Activated naive CD4-positive, alpha-beta T cell treated with anti-CD3 and anti-CD28 coated beads for 36 hours (primary cell): ENCODE measurements at regions of chr3 and their contacts with region 1.

Region 1: DNA sequence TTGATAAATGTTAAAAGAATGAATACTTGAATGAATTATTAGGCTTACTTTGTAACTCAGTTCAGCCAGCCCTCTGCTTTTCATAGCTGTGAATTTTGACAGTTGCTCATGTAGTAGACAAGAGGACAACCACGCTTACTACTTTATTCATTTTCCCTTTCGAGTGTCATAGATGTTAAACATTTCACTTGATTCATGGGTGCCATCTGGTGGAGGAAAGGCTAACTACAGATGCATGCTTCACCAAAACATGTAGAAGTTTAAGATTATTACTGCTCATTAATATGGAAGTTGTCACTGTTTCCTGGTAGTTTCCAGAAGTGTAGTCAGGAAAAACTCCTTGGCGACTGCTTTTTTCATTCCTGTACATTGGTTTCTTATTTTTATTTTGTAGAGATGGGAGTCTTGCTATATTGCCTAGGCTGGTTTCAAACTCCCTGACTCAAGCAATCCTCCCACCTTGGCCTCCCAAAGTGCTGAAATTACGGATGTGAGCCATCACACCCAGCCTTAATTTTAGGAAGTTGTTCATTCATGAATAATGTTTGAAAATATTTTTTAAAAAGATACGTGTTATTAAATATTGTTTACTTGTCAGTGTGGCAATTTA is 163.2 kb downstream of the B3GALNT1 start:
- DNase-seq: peak; percentile 88
- H3K4me3 Mint-ChIP-seq: no peak overlapping the region
- H3K27ac Mint-ChIP-seq: no peak overlapping the region
- H3K4me1 Mint-ChIP-seq: no peaks in the 10 kb centered on the region
- H3K27me3 Mint-ChIP-seq: no peaks in the 10 kb centered on the region

Region 2: GRCh38 chr3:160565442-160566403 is 376.3 kb before region 1 on chr3 and contains the start of gene KPNA4:
- CTCF ChIA-PET with region 1: no interaction called
- intact Hi-C with region 1: loop called (anchors 5 kb)
- DNase-seq: peak; percentile 97
- H3K4me3 Mint-ChIP-seq: peak within 1 kb of the TSS; percentile 93
- H3K27ac Mint-ChIP-seq: peak within 1 kb of the TSS; percentile 97
- H3K4me1 Mint-ChIP-seq: peaks cover 40% of the 10 kb centered on the region
- H3K27me3 Mint-ChIP-seq: no peaks in the 10 kb centered on the region
- total RNA-seq, gene KPNA4: 43.2 to 59.4 TPM

Region 3: GRCh38 chr3:160707187-160707794 is 234.7 kb before region 1 on chr3:
- CTCF ChIA-PET with region 1: interaction called, 30 read pairs
- intact Hi-C with region 1: loop called (anchors 1 kb)
- DNase-seq: peak; percentile 56
- H3K4me3 Mint-ChIP-seq: no peak overlapping the region
- H3K27ac Mint-ChIP-seq: no peak overlapping the region
- H3K4me1 Mint-ChIP-seq: no peaks in the 10 kb centered on the region
- H3K27me3 Mint-ChIP-seq: peaks cover 32% of the 10 kb centered on the region

Region 4: GRCh38 chr3:160921020-160921635 is 20.9 kb before region 1 on chr3:
- CTCF ChIA-PET with region 1: interaction called, 17 read pairs
- intact Hi-C with region 1: loop called (anchors 1 kb)
- DNase-seq: peak; percentile 5
- H3K4me3 Mint-ChIP-seq: no peak overlapping the region
- H3K27ac Mint-ChIP-seq: no peak overlapping the region
- H3K4me1 Mint-ChIP-seq: no peaks in the 10 kb centered on the region
- H3K27me3 Mint-ChIP-seq: peaks cover 2% of the 10 kb centered on the region

Region 5: GRCh38 chr3:161423911-161424522 is 482.0 kb after region 1 on chr3:
- CTCF ChIA-PET with region 1: no interaction called
- intact Hi-C with region 1: loop called (anchors 5 kb)
- DNase-seq: no peak
- H3K4me3 Mint-ChIP-seq: no peak overlapping the region
- H3K27ac Mint-ChIP-seq: no peak overlapping the region
- H3K4me1 Mint-ChIP-seq: no peaks in the 10 kb centered on the region
- H3K27me3 Mint-ChIP-seq: no peaks in the 10 kb centered on the region